Activated B cell treated with CpG ODN at 0.5 μM for 24 hours (primary cell): ENCODE measurements at regions of chr14 and their contacts with region 1.

Region 1: GRCh38 chr14:104752735-104753531 is at the start of gene SIVA1:
- DNase-seq: peak; percentile 98
- ATAC-seq: peak; percentile 89
- H3K4me3 Mint-ChIP-seq: peak within 1 kb of the TSS; percentile 88
- H3K27ac Mint-ChIP-seq: peak within 1 kb of the TSS; percentile 84
- H3K4me1 Mint-ChIP-seq: peaks cover 34% of the 10 kb centered on the region
- H3K27me3 Mint-ChIP-seq: no peaks in the 10 kb centered on the region
- CTCF ChIP-seq: no peak
- total RNA-seq, gene SIVA1: 47.9 and 51.2 TPM in 2 replicates

Region 2: GRCh38 chr14:104665657-104666522 is 87.0 kb before region 1 on chr14:
- CTCF ChIA-PET with region 1: interaction called, 5 read pairs
- POLR2A ChIA-PET with region 1: interaction called, 10 read pairs
- intact Hi-C with region 1: no loop called
- DNase-seq: no peak
- ATAC-seq: peak; percentile 52
- H3K4me3 Mint-ChIP-seq: peak overlapping the region; percentile 16
- H3K27ac Mint-ChIP-seq: peak overlapping the region; percentile 72
- H3K4me1 Mint-ChIP-seq: peaks cover 55% of the 10 kb centered on the region
- H3K27me3 Mint-ChIP-seq: no peaks in the 10 kb centered on the region
- CTCF ChIP-seq: no peak

Region 3: DNA sequence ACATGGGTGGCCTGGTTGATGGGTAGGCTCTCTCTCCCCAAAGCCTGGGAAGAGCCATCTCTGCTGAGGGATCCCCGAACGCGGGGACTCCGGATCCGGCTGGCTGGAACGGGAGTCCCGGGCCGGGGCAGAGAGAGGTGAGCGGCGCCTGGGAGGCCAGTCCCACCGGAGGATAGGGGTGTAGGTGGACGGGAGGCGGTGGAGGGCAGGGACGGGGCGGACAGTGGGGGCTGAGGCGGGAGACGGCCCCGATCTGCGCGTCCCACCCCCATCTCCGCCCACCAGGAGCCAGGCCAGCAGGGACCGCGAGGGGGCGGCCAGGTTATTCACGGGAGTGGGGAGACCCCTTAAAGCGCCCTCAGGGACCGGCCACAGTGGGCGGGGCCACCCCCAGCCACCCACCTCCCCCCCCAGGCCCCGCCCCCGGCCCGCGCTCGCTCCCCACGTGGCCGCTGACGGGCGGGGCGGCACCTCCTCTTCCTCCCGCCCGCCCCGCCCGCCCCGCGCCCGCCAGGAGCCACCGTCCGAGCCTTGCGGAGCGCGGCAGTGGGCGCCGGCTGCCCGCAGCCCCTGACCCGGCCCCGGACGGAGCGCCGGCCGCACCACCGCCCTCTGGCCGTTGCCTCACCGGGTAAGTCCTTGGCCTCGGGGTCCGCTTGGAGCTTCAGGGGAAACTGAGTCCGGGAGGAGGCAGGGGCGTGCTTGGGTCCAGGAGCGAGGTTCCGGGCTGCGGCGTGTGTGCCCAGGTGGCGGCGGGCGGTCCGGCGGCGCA is 63.6 kb before region 1 on chr14 and contains the start of gene INF2:
- CTCF ChIA-PET with region 1: no interaction called
- POLR2A ChIA-PET with region 1: interaction called, 4 read pairs
- intact Hi-C with region 1: loop called (anchors 2 kb)
- DNase-seq: peak; percentile 63
- ATAC-seq: peak; percentile 78
- H3K4me3 Mint-ChIP-seq: peak within 1 kb of the TSS; percentile 72
- H3K27ac Mint-ChIP-seq: no peak within 1 kb of the TSS
- H3K4me1 Mint-ChIP-seq: peaks cover 68% of the 10 kb centered on the region
- H3K27me3 Mint-ChIP-seq: no peaks in the 10 kb centered on the region
- CTCF ChIP-seq: no peak
- total RNA-seq, gene INF2: 38.6 and 47.2 TPM in 2 replicates

Region 4: GRCh38 chr14:104768437-104769323 is 15.7 kb after region 1 on chr14:
- CTCF ChIA-PET with region 1: interaction called, 27 read pairs
- POLR2A ChIA-PET with region 1: interaction called, 3 read pairs
- intact Hi-C with region 1: no loop called
- DNase-seq: peak; percentile 90
- ATAC-seq: peak; percentile 98
- H3K4me3 Mint-ChIP-seq: no peak overlapping the region
- H3K27ac Mint-ChIP-seq: no peak overlapping the region
- H3K4me1 Mint-ChIP-seq: peaks cover 3% of the 10 kb centered on the region
- H3K27me3 Mint-ChIP-seq: no peaks in the 10 kb centered on the region
- CTCF ChIP-seq: no peak

Region 5: DNA sequence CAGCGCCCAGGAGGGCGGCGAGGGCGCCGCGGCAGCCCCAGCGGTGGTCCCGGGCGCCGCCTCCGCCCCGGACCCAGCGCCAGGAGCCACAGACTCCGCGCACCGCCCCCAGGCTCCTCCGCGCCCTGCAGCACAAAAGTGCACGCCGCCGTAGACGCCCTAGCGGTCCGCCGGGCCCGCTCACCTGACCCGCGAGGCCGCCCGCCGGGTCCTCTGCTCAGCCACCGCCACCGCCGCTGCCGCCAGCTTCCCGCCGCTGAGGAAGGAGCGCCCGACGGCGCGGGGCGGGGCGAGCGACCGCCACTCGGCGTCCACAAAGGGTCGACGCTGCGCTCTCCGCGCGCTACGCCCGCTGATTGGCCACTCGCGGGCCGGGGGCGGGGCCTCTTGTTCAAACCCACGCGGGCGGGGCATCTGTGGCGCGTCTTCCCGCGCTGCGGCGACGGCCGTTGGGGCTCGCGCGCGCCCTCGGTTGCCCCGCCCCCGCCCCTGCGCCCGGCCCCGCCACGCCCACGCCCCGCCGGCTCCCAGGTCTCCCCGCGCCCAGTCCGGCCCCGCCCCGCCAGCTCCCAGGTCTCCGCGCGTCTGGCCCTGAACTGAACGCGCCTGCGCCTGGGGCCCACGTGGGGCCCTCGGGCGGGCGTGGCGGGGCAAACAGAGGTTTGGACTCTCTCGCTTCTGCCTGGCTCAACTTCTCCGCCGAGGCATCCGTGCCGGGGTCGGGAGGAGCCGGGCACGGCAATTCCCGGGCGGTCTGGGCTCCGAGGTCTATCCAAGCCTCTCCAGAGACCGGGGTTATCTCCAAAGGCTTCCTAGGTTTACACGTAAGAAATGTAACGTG is 268.1 kb after region 1 on chr14 and contains the start of gene CDCA4:
- CTCF ChIA-PET with region 1: no interaction called
- POLR2A ChIA-PET with region 1: interaction called, 3 read pairs
- intact Hi-C with region 1: loop called (anchors 2 kb)
- DNase-seq: peak; percentile 97
- ATAC-seq: peak; percentile 84
- H3K4me3 Mint-ChIP-seq: peak within 1 kb of the TSS; percentile 92
- H3K27ac Mint-ChIP-seq: peak within 1 kb of the TSS; percentile 94
- H3K4me1 Mint-ChIP-seq: peaks cover 62% of the 10 kb centered on the region
- H3K27me3 Mint-ChIP-seq: no peaks in the 10 kb centered on the region
- CTCF ChIP-seq: no peak
- total RNA-seq, gene CDCA4: 11.7 and 13.6 TPM in 2 replicates